ENCODE measurements at regions of chr2 and their contacts with region 1.

Region 1: DNA sequence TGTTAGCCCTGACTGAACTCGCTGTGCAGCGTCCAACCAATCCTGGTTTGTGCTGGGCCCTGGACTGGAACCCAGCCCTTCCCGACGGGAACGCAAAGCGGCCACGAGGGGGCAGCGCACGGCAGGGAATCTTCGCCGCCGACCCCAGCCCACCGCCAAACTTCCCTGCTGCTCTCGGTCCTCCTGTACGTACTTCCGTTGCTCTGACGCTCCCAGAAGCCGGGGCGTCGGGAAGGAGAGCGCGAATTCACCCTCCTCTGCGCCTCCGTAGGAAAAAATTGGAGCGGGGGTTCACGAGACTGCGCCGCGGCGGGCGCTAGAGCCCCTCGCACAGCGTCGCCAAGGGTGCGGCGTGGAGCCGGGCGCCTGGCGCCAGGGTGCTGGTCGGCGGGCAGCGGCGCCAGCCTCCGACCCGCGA is 948 bp upstream of the SH3RF3 start:
- DNase-seq: peak; percentile 80 to 92 (median 86)
- H3K4me3 ChIP-seq: peak overlapping the region in 3 of 4 donors; percentile 21 to 99 (median 70)
- H3K27ac ChIP-seq: peak overlapping the region in 4 of 5 donors; percentile 64 to 96 (median 80)
- H3K4me1 ChIP-seq: peaks cover 8 to 35% of the 10 kb centered on the region in 2 donors
- H3K27me3 ChIP-seq: no peaks in the 10 kb centered on the region
- CTCF ChIP-seq: peak; percentile 86 to 97 (median 94)
- POLR2A ChIP-seq: peak in 1 of 2 donors; percentile 44

Region 2: DNA sequence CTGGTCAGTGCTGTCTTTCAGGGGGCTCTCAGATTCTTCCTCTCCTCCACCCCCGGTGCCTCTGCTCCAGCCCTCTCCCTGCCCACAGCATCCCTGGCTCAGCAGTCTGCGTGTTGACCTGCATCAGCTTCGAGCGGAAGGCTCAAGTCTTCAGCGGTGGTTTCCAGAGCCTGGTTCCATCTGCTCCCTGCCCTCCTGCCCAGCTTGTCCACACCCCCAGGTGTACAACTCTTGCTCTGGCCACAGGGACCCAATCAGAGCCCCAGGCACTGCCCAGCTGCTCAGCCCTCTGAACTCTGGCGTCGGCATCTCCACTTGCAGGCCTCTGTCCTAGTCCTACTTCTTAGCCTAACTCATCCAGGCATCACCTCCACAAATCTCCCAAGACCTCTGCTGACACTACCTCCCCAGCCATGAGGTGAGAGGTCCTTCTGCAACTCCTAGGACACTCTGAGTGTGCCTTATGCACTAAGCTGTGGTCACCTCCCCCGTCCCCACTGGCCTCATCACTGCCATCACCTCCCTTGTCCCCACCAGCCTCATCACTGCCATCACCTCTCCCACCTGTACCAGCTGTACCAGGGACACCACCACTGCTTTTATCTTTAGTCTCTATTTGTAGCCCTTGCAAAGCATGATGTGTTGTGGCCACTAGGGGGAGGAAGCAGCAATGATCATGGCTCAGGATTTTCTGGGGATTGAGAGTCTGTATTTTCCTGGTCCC is 200.0 kb before region 1 on chr2:
- intact Hi-C with region 1: loop called in 1 of 2 experiments (anchors 10 kb)
- DNase-seq: peak; percentile 33 to 71 (median 50)
- H3K4me3 ChIP-seq: no peak overlapping the region
- H3K27ac ChIP-seq: no peak overlapping the region
- H3K4me1 ChIP-seq: no peaks in the 10 kb centered on the region
- H3K27me3 ChIP-seq: no peaks in the 10 kb centered on the region
- CTCF ChIP-seq: peak; percentile 73 to 89 (median 78)
- POLR2A ChIP-seq: no peak

Region 3: GRCh38 chr2:109185821-109186570 is 57.9 kb after region 1 on chr2:
- intact Hi-C with region 1: loop called in 1 of 2 experiments (anchors 5 kb)
- DNase-seq: peak; percentile 81 to 92 (median 87)
- H3K4me3 ChIP-seq: no peak overlapping the region
- H3K27ac ChIP-seq: peak overlapping the region; percentile 79 to 94 (median 87)
- H3K4me1 ChIP-seq: peaks cover 19 to 20% of the 10 kb centered on the region in 2 donors
- H3K27me3 ChIP-seq: no peaks in the 10 kb centered on the region
- CTCF ChIP-seq: peak in 4 of 6 experiments; percentile 5 to 26 (median 20)
- POLR2A ChIP-seq: peak in 1 of 2 donors; percentile 61

Region 4: DNA sequence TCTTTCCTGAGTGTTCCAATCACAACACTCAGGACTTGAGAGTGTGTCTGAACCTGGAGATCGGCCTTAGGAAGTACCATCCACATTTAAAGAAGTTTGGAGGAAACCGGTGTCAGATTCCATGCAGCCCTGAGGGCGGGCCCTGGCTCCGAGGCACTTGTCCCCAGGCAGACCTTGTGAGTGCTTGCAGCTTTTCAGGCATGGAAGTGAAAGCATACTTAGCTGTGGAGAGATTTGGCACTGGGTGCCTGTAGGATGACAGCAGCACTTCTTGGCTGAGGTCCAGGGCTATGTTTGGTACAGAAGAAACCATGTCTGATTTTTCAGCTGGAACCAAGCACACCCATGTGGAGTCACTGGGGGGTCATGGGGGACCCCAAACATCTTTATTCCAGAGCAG is 254.9 kb after region 1 on chr2:
- intact Hi-C with region 1: loop called in 1 of 2 experiments (anchors 5 kb)
- DNase-seq: peak; percentile 78 to 95 (median 91)
- H3K4me3 ChIP-seq: no peak overlapping the region
- H3K27ac ChIP-seq: peak overlapping the region in 1 of 5 donors; percentile 62
- H3K4me1 ChIP-seq: peaks cover 12 to 13% of the 10 kb centered on the region in 2 donors
- H3K27me3 ChIP-seq: no peaks in the 10 kb centered on the region
- CTCF ChIP-seq: peak in 1 of 6 experiments; percentile 7
- POLR2A ChIP-seq: no peak

Region 5: GRCh38 chr2:109486711-109487535 is 358.9 kb after region 1 on chr2:
- intact Hi-C with region 1: loop called in 1 of 2 experiments (anchors 5 kb)
- DNase-seq: no peak
- H3K4me3 ChIP-seq: no peak overlapping the region
- H3K27ac ChIP-seq: no peak overlapping the region
- H3K4me1 ChIP-seq: peaks cover 0 to 18% of the 10 kb centered on the region in 2 donors
- H3K27me3 ChIP-seq: no peaks in the 10 kb centered on the region
- CTCF ChIP-seq: no peak
- POLR2A ChIP-seq: no peak

Region 6: DNA sequence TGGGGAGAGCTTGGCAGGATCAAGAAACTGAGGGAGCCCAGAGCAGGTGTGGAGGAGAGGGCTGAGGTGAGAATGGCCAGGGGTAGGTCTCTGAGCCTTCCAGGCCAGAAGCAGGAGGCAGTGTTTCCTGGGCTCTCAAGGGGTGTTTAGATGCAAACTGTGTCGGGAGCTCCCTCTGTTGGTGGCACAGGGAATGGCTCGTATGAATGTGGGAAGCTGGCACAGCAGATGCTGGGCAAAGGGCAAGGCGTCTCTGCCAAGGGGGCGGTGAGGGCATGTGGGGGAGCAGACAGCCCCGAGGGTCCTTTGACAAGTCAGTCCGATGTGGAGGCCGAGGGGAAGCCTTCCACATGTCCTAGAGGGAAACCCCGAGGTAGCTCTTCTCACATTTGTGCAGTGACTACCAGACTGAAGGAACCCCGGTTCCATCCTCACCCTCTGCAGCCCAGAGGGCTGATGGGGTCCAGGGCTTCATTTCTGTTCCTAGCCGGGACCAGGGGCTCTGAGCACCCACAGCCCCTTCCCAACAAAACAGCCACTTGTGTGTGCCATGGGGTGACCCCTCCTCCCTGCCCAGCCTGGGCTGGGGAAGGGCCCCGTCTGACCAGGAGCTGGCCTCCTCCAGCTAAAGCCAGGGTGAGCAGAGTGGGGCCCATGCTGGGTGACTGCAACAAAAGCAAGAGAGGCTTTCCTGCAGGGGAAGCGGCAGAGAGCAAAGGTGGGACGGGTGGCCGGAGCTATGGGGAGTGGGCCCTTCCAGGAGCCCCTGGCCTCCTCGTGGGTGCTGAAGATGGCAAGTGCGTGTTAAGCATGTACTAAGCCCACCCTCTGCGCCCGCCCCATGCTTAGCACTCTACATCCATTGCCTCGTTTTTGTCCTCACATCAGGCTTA is 382.3 kb after region 1 on chr2:
- intact Hi-C with region 1: loop called (anchors 2 to 5 kb)
- DNase-seq: peak; percentile 75 to 94 (median 82)
- H3K4me3 ChIP-seq: no peak overlapping the region
- H3K27ac ChIP-seq: no peak overlapping the region
- H3K4me1 ChIP-seq: no peaks in the 10 kb centered on the region
- H3K27me3 ChIP-seq: no peaks in the 10 kb centered on the region
- CTCF ChIP-seq: peak; percentile 90 to 95 (median 93)
- POLR2A ChIP-seq: no peak

Region 7: GRCh38 chr2:109736177-109736827 is 608.2 kb after region 1 on chr2:
- intact Hi-C with region 1: no loop called
- DNase-seq: peak; percentile 46 to 84 (median 57)
- H3K4me3 ChIP-seq: no peak overlapping the region
- H3K27ac ChIP-seq: no peak overlapping the region
- H3K4me1 ChIP-seq: no peaks in the 10 kb centered on the region
- H3K27me3 ChIP-seq: no peaks in the 10 kb centered on the region
- CTCF ChIP-seq: peak; percentile 53 to 76 (median 67)
- POLR2A ChIP-seq: no peak